ENCODE measurements at regions of chr3 and their contacts with region 1.

Region 1: DNA sequence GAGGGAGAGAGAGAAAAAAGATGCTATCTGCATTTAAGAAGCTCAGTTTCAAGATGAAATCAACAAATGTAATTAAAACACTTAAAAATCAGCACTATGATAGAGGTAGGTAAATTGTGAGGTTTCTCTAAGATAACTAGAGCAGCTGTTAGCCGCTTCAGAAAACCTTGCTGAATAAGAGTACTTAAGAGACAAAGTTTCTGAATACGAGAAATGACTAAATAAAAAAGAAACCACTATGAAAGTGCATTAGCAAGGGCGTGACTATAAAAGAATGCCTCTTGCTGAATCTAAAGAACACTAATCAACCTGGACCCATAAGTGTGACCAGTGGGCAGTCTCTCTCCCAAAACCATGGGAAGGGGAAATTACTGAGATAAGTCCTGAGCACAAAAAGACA is 41.8 kb downstream of the IQCB1 start:
- DNase-seq: no peak
- ATAC-seq: peak; percentile 55
- H3K4me3 Mint-ChIP-seq: peak overlapping the region; percentile 82
- H3K27ac Mint-ChIP-seq: peak overlapping the region; percentile 92
- H3K4me1 Mint-ChIP-seq: peaks cover 56% of the 10 kb centered on the region
- H3K27me3 Mint-ChIP-seq: no peaks in the 10 kb centered on the region
- CTCF ChIP-seq: no peak

Region 2: DNA sequence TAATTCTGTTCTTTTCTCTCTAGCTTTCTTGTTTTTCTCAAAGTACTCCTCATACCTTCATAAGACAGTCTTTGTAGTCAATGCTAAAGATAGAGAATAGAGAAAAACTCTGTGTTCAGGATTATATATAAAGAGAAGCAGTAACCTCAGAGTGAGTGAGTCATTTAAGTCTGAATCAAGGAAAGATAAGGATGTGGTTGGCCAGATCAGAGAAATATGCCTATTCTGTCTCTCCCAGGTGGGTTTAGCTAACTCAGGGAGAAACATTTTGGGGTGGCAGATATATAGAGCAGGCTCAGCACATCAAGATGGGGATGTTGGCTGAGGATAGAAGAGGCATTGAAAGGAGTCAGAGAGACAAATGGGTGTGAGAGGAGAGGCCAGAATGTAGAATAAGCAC is 1019.1 kb before region 1 on chr3:
- CTCF ChIA-PET with region 1: no interaction called
- POLR2A ChIA-PET with region 1: no interaction called
- intact Hi-C with region 1: no loop called
- DNase-seq: no peak
- ATAC-seq: no peak
- H3K4me3 Mint-ChIP-seq: no peak overlapping the region
- H3K27ac Mint-ChIP-seq: no peak overlapping the region
- H3K4me1 Mint-ChIP-seq: no peaks in the 10 kb centered on the region
- H3K27me3 Mint-ChIP-seq: no peaks in the 10 kb centered on the region
- CTCF ChIP-seq: no peak

Region 3: GRCh38 chr3:121803771-121804320 is 10.8 kb after region 1 on chr3:
- CTCF ChIA-PET with region 1: no interaction called
- POLR2A ChIA-PET with region 1: interaction called, 25 read pairs
- intact Hi-C with region 1: loop called (anchors 1 kb)
- DNase-seq: no peak
- ATAC-seq: peak; percentile 28
- H3K4me3 Mint-ChIP-seq: peak overlapping the region; percentile 64
- H3K27ac Mint-ChIP-seq: peak overlapping the region; percentile 84
- H3K4me1 Mint-ChIP-seq: peaks cover 66% of the 10 kb centered on the region
- H3K27me3 Mint-ChIP-seq: no peaks in the 10 kb centered on the region
- CTCF ChIP-seq: no peak

Region 4: GRCh38 chr3:121809249-121809648 is 16.2 kb after region 1 on chr3:
- CTCF ChIA-PET with region 1: interaction called, 3 read pairs
- POLR2A ChIA-PET with region 1: interaction called, 25 read pairs
- intact Hi-C with region 1: loop called (anchors 1 kb)
- DNase-seq: no peak
- ATAC-seq: peak; percentile 89
- H3K4me3 Mint-ChIP-seq: peak overlapping the region; percentile 72
- H3K27ac Mint-ChIP-seq: peak overlapping the region; percentile 89
- H3K4me1 Mint-ChIP-seq: peaks cover 81% of the 10 kb centered on the region
- H3K27me3 Mint-ChIP-seq: no peaks in the 10 kb centered on the region
- CTCF ChIP-seq: no peak

Measured in activated B cell treated with CpG ODN at 0.5 μM for 24 hours (primary cell).